Heart right ventricle (tissue), 16 donors: ENCODE measurements at regions of chr14 and their contacts with region 1.

Region 1: DNA sequence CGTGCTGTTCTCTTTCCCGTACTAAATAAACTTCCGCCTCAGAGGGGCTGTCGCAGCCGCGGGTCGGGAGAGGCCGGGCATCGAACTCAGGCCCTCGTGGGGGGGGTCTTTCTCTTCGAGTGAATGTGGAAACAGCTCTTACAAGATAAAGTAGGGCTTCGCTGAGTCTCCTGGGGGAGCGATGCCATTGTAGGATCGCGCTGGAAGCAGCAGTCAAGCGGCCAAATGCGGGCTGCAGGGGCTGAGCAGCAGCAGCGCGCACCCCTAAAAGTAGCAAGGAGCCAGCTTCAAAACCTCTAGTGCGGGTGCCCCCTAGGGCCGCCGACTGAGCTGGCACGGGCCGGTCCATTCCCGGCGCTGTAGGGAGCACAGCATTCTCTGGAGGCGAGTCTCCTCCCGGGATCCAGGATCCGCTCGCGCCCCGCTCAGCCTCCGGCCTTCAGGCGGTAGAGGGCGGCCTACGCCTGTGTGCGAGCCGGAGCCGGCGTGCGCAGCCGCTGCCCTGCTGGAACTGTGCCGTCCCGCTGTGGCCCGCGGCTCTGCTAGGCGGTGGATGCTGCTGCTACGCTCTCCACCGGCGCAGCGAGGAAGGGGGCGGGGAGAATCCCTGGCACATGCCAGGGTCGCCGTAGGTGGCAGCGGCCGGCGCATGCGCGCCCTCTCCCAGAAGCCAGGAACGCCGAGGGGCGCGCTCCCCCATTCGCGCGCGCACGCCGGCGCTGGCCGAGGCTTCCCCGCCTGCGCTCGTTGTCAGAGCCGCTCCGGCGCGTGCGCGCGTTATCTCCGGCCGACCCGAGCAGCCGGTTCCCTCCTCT is at the start of gene FUT8:
- DNase-seq: peak; percentile 94 to 96
- ATAC-seq: peak; percentile 90 to 98 (median 94)
- H3K4me3 ChIP-seq: peak within 1 kb of the TSS; percentile 60 to 94 (median 86)
- H3K27ac ChIP-seq: peak within 1 kb of the TSS; percentile 77 to 98 (median 92)
- H3K4me1 ChIP-seq: peaks cover 0 to 24% (median 12%) of the 10 kb centered on the region in 9 donors
- H3K27me3 ChIP-seq: no peaks in the 10 kb centered on the region
- CTCF ChIP-seq: peak; percentile 38 to 76 (median 59)
- total RNA-seq, gene FUT8: 8.3 to 16.1 (median 11.0) TPM

Region 2: GRCh38 chr14:65164068-65164824 is 248.0 kb before region 1 on chr14:
- intact Hi-C with region 1: loop called in 7 of 10 experiments (anchors 2 to 10 kb)
- DNase-seq: peak in 1 of 2 donors; percentile 40
- ATAC-seq: peak in 5 of 8 donors; percentile 44 to 67 (median 59)
- H3K4me3 ChIP-seq: no peak overlapping the region
- H3K27ac ChIP-seq: no peak overlapping the region
- H3K4me1 ChIP-seq: peaks cover 0 to 7% (median 0%) of the 10 kb centered on the region in 9 donors
- H3K27me3 ChIP-seq: peaks cover 0 to 8% (median 0%) of the 10 kb centered on the region in 7 donors
- CTCF ChIP-seq: peak; percentile 29 to 81 (median 69)

Region 3: DNA sequence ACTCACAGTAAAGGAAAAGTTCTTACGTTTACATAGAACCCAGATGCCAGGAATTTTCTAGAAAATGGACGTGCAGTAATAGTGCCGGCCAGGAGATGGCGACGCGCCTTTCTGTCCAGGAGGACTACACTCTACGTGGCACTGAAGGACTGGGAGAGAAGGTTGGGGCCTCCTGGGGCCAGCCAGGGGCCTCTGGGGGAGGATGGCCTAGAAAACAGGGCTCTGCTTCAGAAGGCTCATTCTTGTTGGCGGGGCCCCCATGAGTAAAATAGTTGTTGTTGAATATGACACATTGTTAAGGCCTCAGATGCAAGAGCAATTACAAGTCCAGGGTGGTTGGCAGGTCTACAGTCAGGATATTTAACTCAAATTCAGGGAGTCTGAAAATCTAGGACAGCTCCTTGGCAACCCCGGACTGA is 189.8 kb before region 1 on chr14:
- intact Hi-C with region 1: loop called in 8 of 10 experiments (anchors 2 to 10 kb)
- DNase-seq: peak; percentile 23 to 55
- ATAC-seq: peak in 7 of 8 donors; percentile 29 to 81 (median 79)
- H3K4me3 ChIP-seq: no peak overlapping the region
- H3K27ac ChIP-seq: peak overlapping the region in 1 of 10 donors; percentile 35
- H3K4me1 ChIP-seq: peaks cover 0 to 31% (median 13%) of the 10 kb centered on the region in 9 donors
- H3K27me3 ChIP-seq: no peaks in the 10 kb centered on the region
- CTCF ChIP-seq: peak; percentile 61 to 88 (median 76)

Region 4: DNA sequence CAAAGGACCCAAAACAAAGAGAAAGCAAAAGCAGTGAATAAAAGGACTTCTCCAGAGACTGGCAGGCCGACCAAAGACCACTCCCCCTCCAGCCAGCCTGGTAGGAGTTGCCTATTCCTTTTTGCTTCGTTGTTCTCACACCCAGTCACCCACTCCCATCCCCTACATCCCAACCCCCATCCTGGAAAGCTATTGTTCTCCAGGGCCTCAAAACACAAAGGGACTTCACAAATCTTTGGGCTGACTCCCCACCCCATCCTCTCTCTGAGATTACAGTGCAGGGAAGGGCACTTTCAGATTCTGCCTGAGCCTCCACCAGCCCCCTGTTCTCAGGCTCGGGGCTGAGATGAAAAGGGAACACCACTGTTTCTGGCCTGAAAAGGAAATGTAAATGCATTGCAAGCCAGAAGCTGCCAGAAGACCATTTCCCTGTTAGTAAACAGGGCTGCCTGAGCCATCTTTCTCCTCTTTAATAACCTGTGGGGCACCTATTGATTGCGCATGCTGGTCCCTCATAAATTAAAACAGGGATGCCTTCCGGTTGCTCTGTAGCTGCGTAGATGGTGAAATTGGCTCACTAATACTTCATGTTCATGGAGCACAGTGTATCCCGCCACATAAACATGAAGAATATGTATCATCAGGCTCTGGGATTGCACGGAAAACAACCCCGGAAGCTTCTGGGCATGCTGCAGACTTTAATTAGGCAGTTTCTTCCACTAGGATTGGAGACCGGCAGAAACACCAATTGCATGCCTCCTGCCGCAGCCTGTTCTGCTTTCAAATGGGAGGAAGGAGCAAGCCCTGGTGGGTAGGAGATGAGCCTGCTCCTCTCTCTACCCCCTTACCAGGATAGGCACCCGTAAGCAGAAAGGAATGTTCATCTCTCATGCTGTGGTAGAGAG is 130.0 kb before region 1 on chr14:
- intact Hi-C with region 1: no loop called
- DNase-seq: peak in 1 of 2 donors; percentile 36
- ATAC-seq: peak; percentile 47 to 84 (median 64)
- H3K4me3 ChIP-seq: peak overlapping the region in 7 of 10 donors; percentile 9 to 35 (median 25)
- H3K27ac ChIP-seq: peak overlapping the region in 5 of 10 donors; percentile 5 to 71 (median 62)
- H3K4me1 ChIP-seq: peaks cover 0 to 18% (median 13%) of the 10 kb centered on the region in 9 donors
- H3K27me3 ChIP-seq: no peaks in the 10 kb centered on the region
- CTCF ChIP-seq: no peak

Region 5: GRCh38 chr14:65431981-65432948 is 20.0 kb after region 1 on chr14:
- intact Hi-C with region 1: no loop called
- DNase-seq: no peak
- ATAC-seq: no peak
- H3K4me3 ChIP-seq: no peak overlapping the region
- H3K27ac ChIP-seq: no peak overlapping the region
- H3K4me1 ChIP-seq: peaks cover 0 to 26% (median 11%) of the 10 kb centered on the region in 9 donors
- H3K27me3 ChIP-seq: no peaks in the 10 kb centered on the region
- CTCF ChIP-seq: no peak

Region 6: DNA sequence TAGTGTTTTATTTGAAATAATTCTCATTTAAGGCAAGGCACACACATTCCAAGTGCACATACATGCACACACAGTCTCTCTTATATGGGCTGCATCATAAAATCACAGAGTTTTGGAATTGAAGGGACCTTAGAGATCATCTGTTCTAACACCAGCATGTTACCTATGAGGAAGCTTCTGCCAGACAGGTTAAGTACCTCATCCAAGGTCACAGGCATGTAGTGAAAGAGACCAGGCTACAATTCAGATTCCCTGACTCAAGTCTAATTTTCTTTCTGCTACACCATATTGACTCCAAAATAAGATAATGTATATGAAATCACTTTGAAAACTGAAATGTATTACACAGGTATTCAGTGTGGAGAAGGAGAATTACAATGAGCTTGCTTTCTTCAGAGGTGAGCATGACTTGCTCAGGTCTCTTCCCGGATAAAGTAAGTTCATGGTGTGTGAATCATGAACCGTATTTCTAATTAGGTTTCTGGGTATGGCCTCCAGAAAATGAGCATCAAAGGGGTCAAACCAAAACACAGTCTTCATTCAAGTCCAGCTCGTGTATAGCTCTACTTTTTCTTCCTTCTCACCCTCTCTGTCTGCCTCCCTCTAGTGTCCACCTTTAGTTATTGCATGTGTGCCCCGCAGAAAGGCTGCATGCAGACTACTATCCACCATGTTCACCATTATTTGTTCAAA is 412.2 kb after region 1 on chr14:
- intact Hi-C with region 1: loop called in 9 of 10 experiments (anchors 1 to 5 kb)
- DNase-seq: peak in 1 of 2 donors; percentile 48
- ATAC-seq: peak in 7 of 8 donors; percentile 55 to 84 (median 71)
- H3K4me3 ChIP-seq: no peak overlapping the region
- H3K27ac ChIP-seq: no peak overlapping the region
- H3K4me1 ChIP-seq: no peaks in the 10 kb centered on the region
- H3K27me3 ChIP-seq: peaks cover 0 to 51% (median 41%) of the 10 kb centered on the region in 7 donors
- CTCF ChIP-seq: peak; percentile 81 to 95 (median 91)

Region 7: GRCh38 chr14:66070509-66071319 is 658.5 kb after region 1 on chr14:
- intact Hi-C with region 1: loop called in 3 of 10 experiments (anchors 10 kb)
- DNase-seq: peak; percentile 23 to 30
- ATAC-seq: peak in 4 of 8 donors; percentile 28 to 63 (median 51)
- H3K4me3 ChIP-seq: no peak overlapping the region
- H3K27ac ChIP-seq: no peak overlapping the region
- H3K4me1 ChIP-seq: no peaks in the 10 kb centered on the region
- H3K27me3 ChIP-seq: peaks cover 0 to 15% (median 4%) of the 10 kb centered on the region in 7 donors
- CTCF ChIP-seq: peak; percentile 42 to 88 (median 77)